PC-3 (cell line): ENCODE measurements at regions of chr16 and their contacts with region 1.

Region 1: DNA sequence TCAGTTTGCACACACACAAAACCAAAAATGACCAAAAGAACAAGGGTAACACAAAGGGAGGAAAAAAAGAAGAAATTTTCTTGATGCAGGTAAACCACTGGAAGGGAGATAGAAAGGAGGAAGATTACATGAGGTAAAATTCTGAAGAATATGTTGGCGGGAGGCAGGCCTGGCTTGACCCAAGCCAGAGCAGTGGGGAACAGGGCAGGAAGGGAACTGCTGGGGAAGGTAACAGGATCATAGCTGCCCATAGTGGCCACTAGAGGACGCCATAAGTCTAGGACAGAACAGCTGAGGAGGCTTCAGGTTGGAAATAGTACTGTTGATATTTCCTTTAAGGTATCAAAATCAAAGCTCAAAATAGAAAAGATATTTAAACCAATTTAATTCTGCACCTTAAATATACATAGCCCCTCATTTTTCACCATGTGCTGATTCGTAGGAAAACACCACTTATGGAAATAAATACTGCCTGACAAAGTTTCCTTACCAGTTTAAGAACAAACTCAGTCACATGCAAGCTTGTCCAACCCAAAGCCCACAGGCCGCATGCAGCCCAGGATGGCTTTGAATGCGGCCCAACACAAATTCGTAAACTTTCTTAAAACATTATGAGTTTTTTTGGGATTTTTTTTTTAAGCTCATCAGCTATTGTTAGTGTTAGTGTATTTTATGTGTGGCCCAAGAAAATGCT is 15.5 kb downstream of the VPS35 start:
- DNase-seq: peak; percentile 60
- ATAC-seq: peak; percentile 85
- H3K4me3 ChIP-seq: no peak overlapping the region
- H3K27ac ChIP-seq: no peak overlapping the region
- H3K4me1 ChIP-seq: no peaks in the 10 kb centered on the region
- H3K27me3 ChIP-seq: no peaks in the 10 kb centered on the region
- CTCF ChIP-seq: peak; percentile 79

Region 2: GRCh38 chr16:46482895-46483294 is 190.6 kb before region 1 on chr16:
- CTCF ChIA-PET with region 1: no interaction called
- POLR2A ChIA-PET with region 1: no interaction called
- intact Hi-C with region 1: no loop called
- DNase-seq: no peak
- ATAC-seq: no peak
- H3K4me3 ChIP-seq: no peak overlapping the region
- H3K27ac ChIP-seq: no peak overlapping the region
- H3K4me1 ChIP-seq: no peaks in the 10 kb centered on the region
- H3K27me3 ChIP-seq: no peaks in the 10 kb centered on the region
- CTCF ChIP-seq: peak; percentile 31; the same call in 1 of the 2 replicates

Region 3: GRCh38 chr16:46689365-46690280 is 16.2 kb after region 1 on chr16 and contains the start of gene ORC6:
- CTCF ChIA-PET with region 1: no interaction called
- POLR2A ChIA-PET with region 1: no interaction called
- intact Hi-C with region 1: loop called (anchors 1 kb)
- DNase-seq: peak; percentile 87
- ATAC-seq: peak; percentile 80
- H3K4me3 ChIP-seq: peak within 1 kb of the TSS; percentile 95
- H3K27ac ChIP-seq: peak within 1 kb of the TSS; percentile 71
- H3K4me1 ChIP-seq: peaks cover 23% of the 10 kb centered on the region
- H3K27me3 ChIP-seq: no peaks in the 10 kb centered on the region
- CTCF ChIP-seq: peak; percentile 50
- total RNA-seq, gene ORC6: 27.7 and 29.9 TPM in 2 replicates